IMR-90 (cell line): ENCODE measurements at regions of chr7 and their contacts with region 1.

Region 1: DNA sequence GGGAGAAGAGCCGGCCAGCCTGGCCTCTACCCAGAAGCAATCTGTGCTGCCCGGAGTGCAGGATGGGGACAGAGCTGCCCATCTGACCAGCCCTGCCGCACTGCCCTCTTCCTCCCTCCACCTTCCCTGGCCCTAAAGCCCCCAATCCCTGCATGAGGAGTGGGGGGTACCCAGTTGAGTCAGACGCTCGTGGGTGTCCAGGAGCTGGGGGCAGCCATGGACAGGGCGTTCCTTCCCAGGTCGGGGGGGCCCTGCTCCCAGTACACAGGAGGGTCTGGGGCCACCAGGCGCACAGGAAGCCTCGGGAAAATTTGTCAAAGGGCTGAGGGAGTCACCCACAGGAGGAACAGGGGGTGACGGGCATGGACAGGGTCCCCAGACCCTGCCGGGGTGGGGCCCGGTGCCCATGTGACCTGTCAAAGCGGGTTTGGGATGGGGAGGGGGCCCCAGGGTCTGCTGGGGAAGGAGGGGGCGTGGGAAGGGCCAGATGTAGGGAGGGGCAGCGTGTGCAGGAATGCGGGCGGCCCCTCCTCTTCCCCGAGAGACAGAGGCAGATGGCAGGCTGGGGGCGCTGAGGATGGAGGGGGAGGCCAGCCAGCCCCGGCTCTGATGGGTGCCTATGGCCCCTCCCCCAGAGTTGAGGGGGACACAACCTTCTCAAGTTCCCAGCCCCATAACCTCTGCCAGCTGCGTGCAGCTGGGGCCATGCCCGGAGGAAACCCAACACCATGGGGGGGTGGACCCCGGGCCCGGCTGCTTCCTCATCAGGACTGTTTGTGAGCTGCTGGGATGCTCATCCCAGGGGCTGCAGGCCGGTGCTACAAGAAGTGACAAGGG is 21.5 kb upstream of the GRIFIN start:
- DNase-seq: no peak
- ATAC-seq: peak; percentile 83
- H3K4me3 ChIP-seq: no peak overlapping the region
- H3K27ac ChIP-seq: no peak overlapping the region
- H3K4me1 ChIP-seq: peaks cover 10% of the 10 kb centered on the region
- H3K27me3 ChIP-seq: peaks cover 6% of the 10 kb centered on the region; the same call in 1 of the 2 replicates
- CTCF ChIP-seq: no peak
- POLR2A ChIP-seq: no peak
- RAD21 ChIP-seq: no peak

Region 2: DNA sequence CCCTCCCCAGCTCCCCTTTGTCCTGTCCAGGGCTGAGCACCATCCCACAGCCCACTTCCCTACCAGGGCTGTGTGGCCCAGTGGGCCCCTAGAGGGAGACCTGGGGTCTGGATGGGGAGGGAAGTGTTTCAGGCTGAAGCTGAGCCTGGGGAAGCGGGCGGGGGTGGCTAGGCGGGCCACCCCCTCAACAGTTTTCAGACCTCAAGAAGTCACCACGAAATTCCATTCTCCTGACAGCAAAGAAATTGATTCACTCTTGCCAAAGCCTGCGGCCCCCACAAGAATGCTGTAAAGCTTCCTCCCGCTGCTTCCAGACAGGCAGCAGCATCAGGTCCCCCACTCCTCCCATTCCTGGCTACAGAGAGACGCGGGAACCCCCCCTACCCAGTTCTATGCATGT is 19.3 kb after region 1 on chr7:
- CTCF ChIA-PET with region 1: no interaction called
- POLR2A ChIA-PET with region 1: no interaction called
- dilution Hi-C with region 1: no loop called
- in situ Hi-C with region 1: no loop called
- intact Hi-C with region 1: loop called (anchors 2 kb)
- DNase-seq: peak; percentile 93
- ATAC-seq: peak; percentile 46
- H3K4me3 ChIP-seq: no peak overlapping the region
- H3K27ac ChIP-seq: peak overlapping the region; percentile 51
- H3K4me1 ChIP-seq: peaks cover 27% of the 10 kb centered on the region
- H3K27me3 ChIP-seq: peaks cover 1% of the 10 kb centered on the region; the same call in 1 of the 2 replicates
- CTCF ChIP-seq: peak; percentile 30; the same call in 1 of the 2 replicates
- POLR2A ChIP-seq: no peak
- RAD21 ChIP-seq: no peak; the same call in none of the 2 replicates

Region 3: GRCh38 chr7:3592401-3593135 is 1094.8 kb after region 1 on chr7:
- CTCF ChIA-PET with region 1: no interaction called
- POLR2A ChIA-PET with region 1: no interaction called
- dilution Hi-C with region 1: no loop called
- in situ Hi-C with region 1: no loop called
- intact Hi-C with region 1: no loop called
- DNase-seq: peak; percentile 5
- ATAC-seq: peak; percentile 77
- H3K4me3 ChIP-seq: no peak overlapping the region
- H3K27ac ChIP-seq: no peak overlapping the region
- H3K4me1 ChIP-seq: no peaks in the 10 kb centered on the region; the same call in 1 of the 2 replicates
- H3K27me3 ChIP-seq: no peaks in the 10 kb centered on the region
- CTCF ChIP-seq: no peak
- POLR2A ChIP-seq: no peak
- RAD21 ChIP-seq: no peak